Left cardiac atrium (tissue), 4 donors: ENCODE measurements at regions of chr20 and their contacts with region 1.

Region 1: DNA sequence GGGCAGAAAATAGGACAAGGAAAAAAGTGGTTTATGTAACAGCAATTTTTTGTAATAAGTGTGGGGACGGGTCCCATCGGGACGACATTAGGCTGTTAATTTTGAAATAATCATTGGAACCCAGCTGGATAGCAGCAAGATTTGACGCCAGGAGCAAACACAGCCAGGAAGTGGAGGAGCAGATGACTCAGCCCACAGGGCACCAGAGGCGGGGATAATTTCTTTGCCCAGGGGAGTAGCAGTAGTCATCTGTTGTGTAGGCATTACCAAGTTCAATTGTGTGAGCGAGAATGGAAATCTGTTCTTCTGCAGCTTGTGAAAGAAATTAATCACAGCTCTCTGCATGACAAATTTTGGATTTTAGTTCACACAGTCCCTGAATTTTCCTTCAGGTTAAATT is 22.6 kb upstream of the RIN2 start:
- DNase-seq: peak; percentile 82
- ATAC-seq: peak; percentile 97 to 98

Region 2: GRCh38 chr20:19552134-19552835 is 183.2 kb before region 1 on chr20:
- intact Hi-C with region 1: no loop called
- DNase-seq: no peak
- ATAC-seq: peak; percentile 91 to 98

Region 3: DNA sequence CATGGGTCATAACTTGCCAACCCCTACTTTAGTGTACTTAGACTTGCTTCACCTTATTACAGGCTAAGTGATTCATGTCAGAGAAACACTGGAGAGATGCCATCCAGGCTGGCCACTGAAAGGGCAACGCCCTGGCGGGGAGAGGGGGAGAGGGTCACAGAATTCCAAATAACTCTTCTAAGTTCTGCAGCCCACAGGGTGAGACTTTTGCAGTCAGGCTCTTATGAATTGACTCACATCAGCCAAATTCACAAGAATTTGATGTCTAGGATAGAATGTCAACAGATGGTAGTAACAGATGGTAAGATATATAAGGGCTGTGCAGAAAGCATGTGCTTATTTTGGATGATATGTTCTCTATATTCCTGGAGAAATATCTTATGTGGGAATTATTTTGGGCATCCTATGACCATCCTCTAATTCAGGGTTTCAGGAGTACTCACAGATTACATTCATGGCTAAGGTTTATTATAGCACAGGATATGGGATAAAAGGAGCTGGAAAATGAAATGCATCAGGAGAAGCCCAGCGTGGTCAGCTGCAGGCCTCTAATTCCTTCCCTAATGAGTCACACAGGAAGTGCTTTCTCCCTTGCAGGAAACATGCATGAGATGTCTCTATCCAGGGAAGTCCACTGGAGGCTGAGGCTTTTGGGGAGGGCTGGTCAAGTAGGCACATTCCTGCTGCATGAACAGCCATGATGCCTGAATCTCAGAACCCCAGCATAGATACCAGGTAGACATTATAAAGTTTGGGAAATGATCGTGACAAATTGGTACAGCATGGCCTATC is 36.1 kb before region 1 on chr20:
- intact Hi-C with region 1: loop called (anchors 5 to 10 kb)
- DNase-seq: no peak
- ATAC-seq: peak in 1 of 2 donors; percentile 53